ENCODE measurements at regions of chr6 and their contacts with region 1.

Region 1: GRCh38 chr6:110815217-110816109 is at the start of gene CDK19:
- DNase-seq: peak; percentile 97 to 98
- H3K4me3 ChIP-seq: peak within 1 kb of the TSS; percentile 99
- H3K4me3 Mint-ChIP-seq: peak within 1 kb of the TSS; percentile 100
- H3K27ac Mint-ChIP-seq: peak within 1 kb of the TSS; percentile 100
- H3K4me1 ChIP-seq: peaks cover 14% of the 10 kb centered on the region; the same call in 1 of the 2 replicates
- H3K4me1 Mint-ChIP-seq: peaks cover 20% of the 10 kb centered on the region
- H3K27me3 ChIP-seq: no peaks in the 10 kb centered on the region
- H3K27me3 Mint-ChIP-seq: no peaks in the 10 kb centered on the region
- CTCF ChIP-seq: no peak
- total RNA-seq, gene CDK19: 23.1 and 24.6 TPM in 2 replicates

Region 2: GRCh38 chr6:110720066-110720465 is 95.4 kb before region 1 on chr6:
- CTCF ChIA-PET with region 1: no interaction called
- POLR2A ChIA-PET with region 1: no interaction called
- intact Hi-C with region 1: no loop called
- DNase-seq: no peak
- H3K4me3 ChIP-seq: no peak overlapping the region
- H3K4me3 Mint-ChIP-seq: no peak overlapping the region
- H3K27ac Mint-ChIP-seq: no peak overlapping the region
- H3K4me1 ChIP-seq: no peaks in the 10 kb centered on the region
- H3K4me1 Mint-ChIP-seq: no peaks in the 10 kb centered on the region
- H3K27me3 ChIP-seq: no peaks in the 10 kb centered on the region
- H3K27me3 Mint-ChIP-seq: no peaks in the 10 kb centered on the region
- CTCF ChIP-seq: no peak

Region 3: GRCh38 chr6:110756817-110757216 is 58.6 kb before region 1 on chr6:
- CTCF ChIA-PET with region 1: no interaction called
- POLR2A ChIA-PET with region 1: interaction called, 19 read pairs
- intact Hi-C with region 1: loop called (anchors 2 kb)
- DNase-seq: no peak
- H3K4me3 ChIP-seq: no peak overlapping the region
- H3K4me3 Mint-ChIP-seq: no peak overlapping the region
- H3K27ac Mint-ChIP-seq: peak overlapping the region; percentile 28
- H3K4me1 ChIP-seq: peaks cover 42% of the 10 kb centered on the region
- H3K4me1 Mint-ChIP-seq: peaks cover 37% of the 10 kb centered on the region
- H3K27me3 ChIP-seq: no peaks in the 10 kb centered on the region
- H3K27me3 Mint-ChIP-seq: no peaks in the 10 kb centered on the region
- CTCF ChIP-seq: no peak

Region 4: DNA sequence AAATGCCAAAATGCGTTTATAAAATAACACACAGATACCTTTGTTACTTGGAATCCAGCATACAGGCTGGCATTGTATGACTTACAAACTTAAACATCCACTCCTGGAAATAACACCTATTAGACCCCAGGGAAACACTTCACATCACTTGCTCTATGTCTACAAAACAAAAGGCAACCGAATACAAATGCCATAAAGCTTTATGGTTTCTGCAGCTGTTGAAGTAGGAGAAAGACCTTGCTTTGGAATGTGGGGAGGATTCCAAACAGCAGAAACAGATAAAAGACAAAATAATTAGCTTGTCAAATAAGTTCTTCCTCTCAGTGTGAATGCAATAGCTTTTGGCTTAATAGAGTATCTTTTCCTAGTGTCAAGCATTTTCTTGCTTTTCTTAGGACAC is 49.4 kb after region 1 on chr6:
- CTCF ChIA-PET with region 1: no interaction called
- POLR2A ChIA-PET with region 1: interaction called, 11 read pairs
- intact Hi-C with region 1: no loop called
- DNase-seq: peak in 1 of 2 experiments; percentile 10
- H3K4me3 ChIP-seq: no peak overlapping the region
- H3K4me3 Mint-ChIP-seq: no peak overlapping the region
- H3K27ac Mint-ChIP-seq: no peak overlapping the region
- H3K4me1 ChIP-seq: peaks cover 13% of the 10 kb centered on the region
- H3K4me1 Mint-ChIP-seq: no peaks in the 10 kb centered on the region
- H3K27me3 ChIP-seq: no peaks in the 10 kb centered on the region
- H3K27me3 Mint-ChIP-seq: no peaks in the 10 kb centered on the region
- CTCF ChIP-seq: no peak

Region 5: DNA sequence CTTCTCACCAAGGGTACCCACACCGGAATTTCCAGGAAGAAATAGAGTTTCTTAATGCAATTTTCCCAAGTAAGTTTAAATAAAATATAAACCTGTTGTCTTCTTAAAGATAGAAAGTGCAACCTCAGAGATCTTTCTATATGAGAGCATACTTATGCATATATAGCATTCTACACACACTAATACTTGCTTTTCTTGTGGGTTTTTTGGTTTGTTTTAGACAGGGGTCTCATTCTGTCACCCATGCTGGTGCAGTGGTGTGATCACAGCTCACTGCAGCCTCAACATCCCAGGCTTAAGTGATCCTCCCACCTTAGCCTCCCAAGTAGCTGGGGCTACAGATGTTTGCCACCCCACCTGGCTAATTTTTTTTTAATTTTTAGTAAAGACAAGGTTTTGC is 74.8 kb after region 1 on chr6:
- CTCF ChIA-PET with region 1: interaction called, 13 read pairs
- POLR2A ChIA-PET with region 1: interaction called, 3 read pairs
- intact Hi-C with region 1: no loop called
- DNase-seq: no peak
- H3K4me3 ChIP-seq: no peak overlapping the region
- H3K4me3 Mint-ChIP-seq: no peak overlapping the region
- H3K27ac Mint-ChIP-seq: no peak overlapping the region
- H3K4me1 ChIP-seq: peaks cover 14% of the 10 kb centered on the region
- H3K4me1 Mint-ChIP-seq: peaks cover 7% of the 10 kb centered on the region
- H3K27me3 ChIP-seq: no peaks in the 10 kb centered on the region
- H3K27me3 Mint-ChIP-seq: no peaks in the 10 kb centered on the region
- CTCF ChIP-seq: no peak

Region 6: DNA sequence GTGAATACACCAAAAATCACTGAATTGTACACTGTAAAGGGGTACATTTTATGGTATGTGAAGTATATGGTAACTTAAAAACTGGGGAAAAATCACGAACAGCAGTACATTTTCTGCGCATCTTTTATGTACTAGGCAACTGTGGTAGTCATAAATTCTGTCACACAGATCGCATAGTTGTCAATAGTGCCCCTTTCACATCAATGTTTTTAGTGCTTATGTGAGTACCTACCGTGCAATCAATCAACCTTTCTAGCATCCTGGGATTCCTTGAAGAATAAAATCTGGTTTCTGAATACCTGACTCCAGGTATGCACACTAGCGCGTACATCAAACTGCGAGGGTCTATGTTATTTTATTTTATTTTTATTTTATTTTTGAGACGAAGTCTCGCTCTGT is 165.7 kb after region 1 on chr6:
- CTCF ChIA-PET with region 1: no interaction called
- POLR2A ChIA-PET with region 1: interaction called, 10 read pairs
- intact Hi-C with region 1: loop called (anchors 5 kb)
- DNase-seq: no peak
- H3K4me3 ChIP-seq: peak overlapping the region; percentile 86
- H3K4me3 Mint-ChIP-seq: peak overlapping the region; percentile 95
- H3K27ac Mint-ChIP-seq: peak overlapping the region; percentile 98
- H3K4me1 ChIP-seq: no peaks in the 10 kb centered on the region
- H3K4me1 Mint-ChIP-seq: peaks cover 12% of the 10 kb centered on the region
- H3K27me3 ChIP-seq: no peaks in the 10 kb centered on the region
- H3K27me3 Mint-ChIP-seq: no peaks in the 10 kb centered on the region
- CTCF ChIP-seq: no peak

Measured in Caco-2 (cell line).